OCI-LY7 (cell line): ENCODE measurements at regions of chr6 and their contacts with region 1.

Region 1: DNA sequence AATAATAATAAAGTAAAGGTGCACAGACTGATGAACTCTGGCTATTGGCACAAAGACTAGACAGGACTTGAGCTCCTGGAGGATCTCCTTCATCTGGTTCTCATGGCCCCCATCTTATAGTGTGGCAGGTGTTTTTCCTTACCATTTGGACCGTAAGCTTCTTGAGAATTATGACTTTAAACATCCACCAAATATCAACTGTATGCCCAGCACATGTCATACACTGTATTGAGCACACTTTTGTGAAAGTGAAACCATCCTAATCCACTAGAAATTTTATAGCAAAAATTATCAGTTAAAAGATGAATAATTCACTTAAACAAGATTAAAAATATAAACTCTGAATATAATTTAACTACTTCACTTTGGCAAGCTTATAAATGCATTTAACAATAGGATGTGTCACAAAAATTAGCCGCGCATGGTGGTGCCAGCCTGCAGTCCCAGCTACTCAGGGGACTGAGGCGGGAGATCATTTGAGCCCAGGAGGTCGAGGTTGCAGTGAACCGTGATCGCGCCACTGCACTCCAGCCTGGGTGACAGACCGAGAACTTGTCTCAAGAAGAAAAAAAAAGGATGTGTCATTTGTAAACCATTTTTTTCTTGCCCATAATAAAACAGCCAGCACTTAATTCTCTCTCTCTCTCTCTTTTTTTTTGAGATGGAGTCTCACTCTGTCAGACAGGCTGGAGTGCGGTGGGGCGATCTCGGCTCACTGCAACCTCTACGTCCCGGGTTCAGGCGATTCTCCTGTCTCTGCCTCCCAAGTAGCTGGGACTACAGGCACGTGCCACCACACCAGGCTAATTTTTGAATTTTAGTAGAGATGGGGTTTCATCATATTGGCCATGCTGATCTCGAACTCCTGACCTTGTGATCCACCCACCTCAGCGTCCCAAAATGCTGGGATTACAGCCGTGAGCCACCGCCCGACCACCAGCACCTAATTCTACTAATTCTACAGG is 9.1 kb downstream of the HIVEP2 start:
- DNase-seq: peak; percentile 66
- H3K4me3 ChIP-seq: peak overlapping the region; percentile 33
- H3K27ac ChIP-seq: peak overlapping the region; percentile 61
- H3K4me1 ChIP-seq: peaks cover 93% of the 10 kb centered on the region
- CTCF ChIP-seq: no peak

Region 2: GRCh38 chr6:141483598-141484061 is 1452.2 kb before region 1 on chr6:
- CTCF ChIA-PET with region 1: no interaction called
- POLR2A ChIA-PET with region 1: no interaction called
- intact Hi-C with region 1: no loop called
- DNase-seq: peak; percentile 93
- H3K4me3 ChIP-seq: peak overlapping the region; percentile 59
- H3K27ac ChIP-seq: peak overlapping the region; percentile 90
- H3K4me1 ChIP-seq: peaks cover 66% of the 10 kb centered on the region
- CTCF ChIP-seq: no peak

Region 3: DNA sequence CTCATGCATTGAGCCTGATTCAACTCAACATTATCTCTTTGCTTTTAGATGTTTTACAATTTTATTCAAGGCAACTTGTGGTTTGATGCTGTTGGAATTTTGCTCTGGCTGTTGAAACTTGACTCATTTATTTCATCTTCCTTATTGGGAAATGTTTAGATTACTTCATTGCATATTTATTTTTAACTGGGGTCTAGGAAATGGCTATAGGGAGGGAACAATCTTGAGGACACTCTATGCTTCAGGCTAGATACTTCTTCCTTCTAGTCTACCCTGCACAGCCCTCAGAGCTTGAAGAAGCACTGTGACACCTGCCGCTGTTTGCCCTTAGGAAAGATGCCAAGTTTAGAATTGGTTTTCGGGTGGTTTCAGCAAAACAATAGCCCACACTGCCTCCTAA is 450.6 kb before region 1 on chr6:
- CTCF ChIA-PET with region 1: no interaction called
- POLR2A ChIA-PET with region 1: no interaction called
- intact Hi-C with region 1: no loop called
- DNase-seq: no peak
- H3K4me3 ChIP-seq: no peak overlapping the region
- H3K27ac ChIP-seq: no peak overlapping the region
- H3K4me1 ChIP-seq: no peaks in the 10 kb centered on the region
- CTCF ChIP-seq: no peak

Region 4: DNA sequence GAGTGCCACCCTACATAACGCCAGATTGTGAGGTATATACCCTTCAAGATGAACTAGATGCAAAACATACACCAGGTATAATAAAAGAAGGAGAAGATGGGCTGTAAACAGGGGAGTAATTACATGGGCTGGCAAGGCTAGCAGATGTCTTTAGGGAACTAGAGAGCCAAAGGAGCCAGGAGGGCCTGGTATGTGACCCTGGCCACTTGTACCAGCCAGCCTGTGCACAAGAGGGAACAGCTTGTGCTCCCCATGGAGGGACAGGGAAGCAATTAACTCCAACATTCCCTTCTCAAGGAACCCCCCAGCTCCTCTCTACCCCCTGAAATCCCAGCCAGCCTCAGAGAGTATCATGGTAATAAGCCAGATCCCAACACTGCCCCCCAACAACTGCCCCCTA is 130.8 kb before region 1 on chr6:
- CTCF ChIA-PET with region 1: interaction called, 16 read pairs
- POLR2A ChIA-PET with region 1: no interaction called
- intact Hi-C with region 1: no loop called
- DNase-seq: no peak
- H3K4me3 ChIP-seq: no peak overlapping the region
- H3K27ac ChIP-seq: no peak overlapping the region
- H3K4me1 ChIP-seq: no peaks in the 10 kb centered on the region
- CTCF ChIP-seq: no peak